ENCODE measurements at regions of chr3 and their contacts with region 1.

Region 1: GRCh38 chr3:3200632-3201212 is 21.2 kb upstream of the CRBN start:
- DNase-seq: peak in 1 of 2 donors; percentile 43
- H3K4me3 ChIP-seq: no peak overlapping the region
- H3K27ac ChIP-seq: no peak overlapping the region
- H3K4me1 ChIP-seq: peaks cover 0 to 5% (median 0%) of the 10 kb centered on the region in 4 donors
- H3K27me3 ChIP-seq: no peaks in the 10 kb centered on the region
- CTCF ChIP-seq: peak; percentile 67 to 77

Region 2: DNA sequence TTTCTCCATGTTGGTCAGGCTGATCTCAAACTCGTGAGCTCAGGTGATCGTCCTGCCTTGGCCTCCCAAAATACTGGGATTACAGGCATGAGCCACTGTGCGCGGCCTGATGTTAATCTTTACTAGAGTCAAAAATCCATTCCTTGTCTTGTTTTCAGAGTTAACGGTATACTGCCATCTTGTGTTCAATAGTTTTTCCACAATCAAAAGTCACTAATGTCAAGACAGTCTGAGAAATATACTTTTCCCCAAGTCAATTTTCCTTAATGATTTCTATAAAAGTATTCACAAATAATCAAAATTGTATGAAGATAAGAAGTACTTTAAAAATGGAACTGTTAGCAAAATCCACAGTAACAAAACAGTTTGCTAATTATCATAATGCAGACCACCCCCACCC is 29.7 kb before region 1 on chr3:
- intact Hi-C with region 1: no loop called
- DNase-seq: no peak
- H3K4me3 ChIP-seq: no peak overlapping the region
- H3K27ac ChIP-seq: no peak overlapping the region
- H3K4me1 ChIP-seq: peaks cover 0 to 6% (median 3%) of the 10 kb centered on the region in 4 donors
- H3K27me3 ChIP-seq: no peaks in the 10 kb centered on the region
- CTCF ChIP-seq: peak in 1 of 2 experiments; percentile 9

Region 3: DNA sequence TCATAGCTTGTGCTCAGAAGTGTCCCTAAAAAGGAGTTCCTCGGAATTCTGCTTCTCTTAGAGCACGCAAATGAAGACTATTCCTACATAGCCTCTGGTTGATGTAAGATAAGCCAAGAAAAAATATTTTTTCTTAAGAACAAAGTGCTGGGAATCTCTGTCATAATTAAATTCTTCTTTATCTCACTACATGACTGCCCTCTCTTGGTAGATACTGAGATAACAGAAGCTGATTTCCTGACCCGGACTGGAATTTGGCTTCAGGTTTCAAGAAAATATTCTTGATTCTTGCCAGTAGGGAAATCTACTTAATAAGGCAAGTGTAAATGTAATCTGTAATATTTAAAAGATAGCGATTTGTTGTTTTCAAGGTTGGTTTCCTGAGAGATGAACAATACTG is 1071.1 kb after region 1 on chr3:
- intact Hi-C with region 1: loop called (anchors 5 kb)
- DNase-seq: no peak
- H3K4me3 ChIP-seq: no peak overlapping the region
- H3K27ac ChIP-seq: no peak overlapping the region
- H3K4me1 ChIP-seq: peaks cover 0 to 5% (median 4%) of the 10 kb centered on the region in 4 donors
- H3K27me3 ChIP-seq: no peaks in the 10 kb centered on the region
- CTCF ChIP-seq: peak; percentile 44 to 57

Region 4: GRCh38 chr3:4290272-4290893 is 1089.7 kb after region 1 on chr3:
- intact Hi-C with region 1: loop called (anchors 5 kb)
- DNase-seq: peak in 1 of 2 donors; percentile 35
- H3K4me3 ChIP-seq: no peak overlapping the region
- H3K27ac ChIP-seq: no peak overlapping the region
- H3K4me1 ChIP-seq: no peaks in the 10 kb centered on the region
- H3K27me3 ChIP-seq: no peaks in the 10 kb centered on the region
- CTCF ChIP-seq: peak; percentile 83 to 92

Measured in tibial artery (tissue), 4 donors.